ENCODE measurements at regions of chr10 and their contacts with region 1.

Region 1: GRCh38 chr10:68301790-68302502 is 29.9 kb upstream of the HNRNPH3 start:
- DNase-seq: peak; percentile 68
- ATAC-seq: peak; percentile 64
- H3K4me3 ChIP-seq: no peak overlapping the region
- H3K4me3 Mint-ChIP-seq: peak overlapping the region; percentile 75
- H3K27ac ChIP-seq: no peak overlapping the region
- H3K27ac Mint-ChIP-seq: peak overlapping the region; percentile 91
- H3K4me1 ChIP-seq: peaks cover 24 to 26% of the 10 kb centered on the region in 2 donors
- H3K4me1 Mint-ChIP-seq: peaks cover 30% of the 10 kb centered on the region
- H3K27me3 ChIP-seq: no peaks in the 10 kb centered on the region
- H3K27me3 Mint-ChIP-seq: no peaks in the 10 kb centered on the region
- CTCF ChIP-seq: peak; percentile 74

Region 2: GRCh38 chr10:67697724-67698131 is 604.2 kb before region 1 on chr10:
- CTCF ChIA-PET with region 1: interaction called, 10 read pairs
- POLR2A ChIA-PET with region 1: no interaction called
- intact Hi-C with region 1: loop called (anchors 2 kb)
- DNase-seq: peak; percentile 67
- ATAC-seq: peak; percentile 71
- H3K4me3 ChIP-seq: no peak overlapping the region
- H3K4me3 Mint-ChIP-seq: no peak overlapping the region
- H3K27ac ChIP-seq: no peak overlapping the region
- H3K27ac Mint-ChIP-seq: no peak overlapping the region
- H3K4me1 ChIP-seq: no peaks in the 10 kb centered on the region
- H3K4me1 Mint-ChIP-seq: no peaks in the 10 kb centered on the region
- H3K27me3 ChIP-seq: peaks cover 0 to 9% (median 0%) of the 10 kb centered on the region in 4 experiments
- H3K27me3 Mint-ChIP-seq: peaks cover 46% of the 10 kb centered on the region
- CTCF ChIP-seq: peak; percentile 82

Region 3: GRCh38 chr10:67849331-67850011 is 452.5 kb before region 1 on chr10:
- CTCF ChIA-PET with region 1: interaction called, 57 read pairs
- POLR2A ChIA-PET with region 1: no interaction called
- intact Hi-C with region 1: no loop called
- DNase-seq: peak; percentile 93
- ATAC-seq: peak; percentile 99
- H3K4me3 ChIP-seq: peak overlapping the region; percentile 79 to 98 (median 96)
- H3K4me3 Mint-ChIP-seq: peak overlapping the region; percentile 97
- H3K27ac ChIP-seq: peak overlapping the region; percentile 89 to 91
- H3K27ac Mint-ChIP-seq: peak overlapping the region; percentile 97
- H3K4me1 ChIP-seq: peaks cover 5 to 9% of the 10 kb centered on the region in 2 donors
- H3K4me1 Mint-ChIP-seq: peaks cover 8% of the 10 kb centered on the region
- H3K27me3 ChIP-seq: no peaks in the 10 kb centered on the region
- H3K27me3 Mint-ChIP-seq: no peaks in the 10 kb centered on the region
- CTCF ChIP-seq: no peak

Region 4: GRCh38 chr10:68156373-68157185 is 145.4 kb before region 1 on chr10:
- CTCF ChIA-PET with region 1: interaction called, 52 read pairs
- POLR2A ChIA-PET with region 1: no interaction called
- intact Hi-C with region 1: loop called (anchors 5 kb)
- DNase-seq: peak; percentile 74
- ATAC-seq: no peak
- H3K4me3 ChIP-seq: no peak overlapping the region
- H3K4me3 Mint-ChIP-seq: no peak overlapping the region
- H3K27ac ChIP-seq: no peak overlapping the region
- H3K27ac Mint-ChIP-seq: no peak overlapping the region
- H3K4me1 ChIP-seq: no peaks in the 10 kb centered on the region
- H3K4me1 Mint-ChIP-seq: no peaks in the 10 kb centered on the region
- H3K27me3 ChIP-seq: no peaks in the 10 kb centered on the region
- H3K27me3 Mint-ChIP-seq: peaks cover 5% of the 10 kb centered on the region
- CTCF ChIP-seq: peak; percentile 90

Region 5: GRCh38 chr10:68231106-68231816 is 70.7 kb before region 1 on chr10:
- CTCF ChIA-PET with region 1: interaction called, 8 read pairs
- POLR2A ChIA-PET with region 1: no interaction called
- intact Hi-C with region 1: loop called (anchors 5 kb)
- DNase-seq: peak; percentile 65
- ATAC-seq: peak; percentile 89
- H3K4me3 ChIP-seq: peak overlapping the region; percentile 41 to 71 (median 63)
- H3K4me3 Mint-ChIP-seq: peak overlapping the region; percentile 77
- H3K27ac ChIP-seq: no peak overlapping the region
- H3K27ac Mint-ChIP-seq: no peak overlapping the region
- H3K4me1 ChIP-seq: peaks cover 10 to 12% of the 10 kb centered on the region in 2 donors
- H3K4me1 Mint-ChIP-seq: peaks cover 8% of the 10 kb centered on the region
- H3K27me3 ChIP-seq: peaks cover 0 to 31% (median 27%) of the 10 kb centered on the region in 4 experiments
- H3K27me3 Mint-ChIP-seq: peaks cover 41% of the 10 kb centered on the region
- CTCF ChIP-seq: no peak

Region 6: GRCh38 chr10:68331455-68332258 is 29.7 kb after region 1 on chr10 and contains the start of gene HNRNPH3:
- CTCF ChIA-PET with region 1: interaction called, 51 read pairs
- POLR2A ChIA-PET with region 1: interaction called, 9 read pairs
- intact Hi-C with region 1: loop called (anchors 2 kb)
- DNase-seq: peak; percentile 100
- ATAC-seq: peak; percentile 84
- H3K4me3 ChIP-seq: peak within 1 kb of the TSS; percentile 77 to 95 (median 90)
- H3K4me3 Mint-ChIP-seq: peak within 1 kb of the TSS; percentile 99
- H3K27ac ChIP-seq: peak within 1 kb of the TSS; percentile 93 to 94
- H3K27ac Mint-ChIP-seq: peak within 1 kb of the TSS; percentile 100
- H3K4me1 ChIP-seq: peaks cover 42 to 51% of the 10 kb centered on the region in 2 donors
- H3K4me1 Mint-ChIP-seq: peaks cover 62% of the 10 kb centered on the region
- H3K27me3 ChIP-seq: no peaks in the 10 kb centered on the region
- H3K27me3 Mint-ChIP-seq: no peaks in the 10 kb centered on the region
- CTCF ChIP-seq: no peak
- total RNA-seq, gene HNRNPH3: 120 and 124 TPM in 2 replicates

Region 7: DNA sequence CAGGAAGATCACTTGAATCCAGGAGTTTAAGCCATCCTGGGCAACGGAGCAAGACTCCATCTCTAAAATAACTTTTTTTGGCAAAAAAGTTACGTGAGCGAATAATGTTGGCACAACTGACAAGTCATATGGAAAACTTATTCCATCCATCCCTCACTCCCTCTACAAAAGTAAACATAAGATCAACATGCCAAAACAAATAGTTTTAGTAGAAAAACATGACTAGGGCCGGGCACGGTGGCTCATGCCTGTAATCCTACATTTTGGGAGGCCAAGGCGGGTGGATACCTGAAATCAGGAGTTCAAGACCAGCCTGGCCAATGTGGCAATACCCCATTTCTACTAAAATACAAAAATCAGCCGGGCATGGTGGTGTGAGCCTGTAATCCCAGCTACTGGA is 199.7 kb after region 1 on chr10:
- CTCF ChIA-PET with region 1: no interaction called
- POLR2A ChIA-PET with region 1: no interaction called
- intact Hi-C with region 1: no loop called
- DNase-seq: no peak
- ATAC-seq: no peak
- H3K4me3 ChIP-seq: no peak overlapping the region
- H3K4me3 Mint-ChIP-seq: no peak overlapping the region
- H3K27ac ChIP-seq: no peak overlapping the region
- H3K27ac Mint-ChIP-seq: no peak overlapping the region
- H3K4me1 ChIP-seq: no peaks in the 10 kb centered on the region
- H3K4me1 Mint-ChIP-seq: no peaks in the 10 kb centered on the region
- H3K27me3 ChIP-seq: no peaks in the 10 kb centered on the region
- H3K27me3 Mint-ChIP-seq: no peaks in the 10 kb centered on the region
- CTCF ChIP-seq: no peak